CD4-positive, alpha-beta T cell (primary cell): ENCODE measurements at regions of chr10 and their contacts with region 1.

Region 1: DNA sequence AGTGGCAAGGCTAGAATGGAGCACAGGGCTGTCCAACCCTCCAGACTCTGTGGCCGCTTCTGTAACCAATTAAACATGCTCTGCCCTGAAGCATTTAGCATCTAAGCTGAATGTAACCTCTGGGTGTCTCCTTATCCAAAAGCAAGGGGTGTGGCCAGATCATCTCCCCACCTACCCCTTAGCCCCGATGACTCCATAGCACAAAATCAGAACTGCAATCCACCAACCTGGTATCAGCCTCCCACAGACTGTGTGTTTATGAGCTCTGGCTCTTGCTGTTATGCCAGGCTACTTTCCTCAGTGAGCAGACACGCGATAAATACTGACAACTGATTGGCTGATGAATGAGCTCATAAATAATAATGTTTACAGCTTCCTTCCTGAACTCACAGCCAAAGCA is 3.2 kb downstream of the FRMD4A start:
- DNase-seq: no peak
- ATAC-seq: no peak
- H3K4me3 ChIP-seq: no peak overlapping the region
- H3K4me3 Mint-ChIP-seq: no peak overlapping the region
- H3K27ac ChIP-seq: no peak overlapping the region
- H3K27ac Mint-ChIP-seq: no peak overlapping the region
- H3K4me1 ChIP-seq: no peaks in the 10 kb centered on the region
- H3K4me1 Mint-ChIP-seq: no peaks in the 10 kb centered on the region
- H3K27me3 ChIP-seq: peaks cover 8 to 30% of the 10 kb centered on the region in 2 experiments
- H3K27me3 Mint-ChIP-seq: peaks cover 42% of the 10 kb centered on the region
- CTCF ChIP-seq: no peak

Region 2: DNA sequence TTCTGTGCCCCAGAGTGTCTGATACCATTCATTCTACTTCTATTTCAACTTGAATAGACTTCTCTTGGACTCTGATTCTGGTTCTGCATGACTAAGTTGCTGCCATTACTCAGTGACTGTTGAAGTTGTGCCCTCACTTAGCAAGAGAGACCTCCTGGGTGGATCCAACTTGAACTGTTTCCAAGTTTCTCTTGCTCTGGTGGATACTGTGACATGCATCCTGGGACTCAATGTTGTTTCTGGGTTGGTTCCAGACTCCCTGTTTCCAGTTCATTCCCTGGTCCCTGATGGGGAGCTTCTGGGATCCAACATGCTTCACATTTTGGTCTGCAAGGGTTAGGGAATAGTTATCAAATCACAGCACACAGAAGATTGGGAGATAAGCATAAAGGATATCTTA is 766.9 kb before region 1 on chr10:
- CTCF ChIA-PET with region 1: no interaction called
- POLR2A ChIA-PET with region 1: no interaction called
- intact Hi-C with region 1: no loop called
- DNase-seq: no peak
- ATAC-seq: no peak
- H3K4me3 ChIP-seq: no peak overlapping the region
- H3K4me3 Mint-ChIP-seq: no peak overlapping the region
- H3K27ac ChIP-seq: no peak overlapping the region
- H3K27ac Mint-ChIP-seq: no peak overlapping the region
- H3K4me1 ChIP-seq: no peaks in the 10 kb centered on the region
- H3K4me1 Mint-ChIP-seq: no peaks in the 10 kb centered on the region
- H3K27me3 ChIP-seq: no peaks in the 10 kb centered on the region
- H3K27me3 Mint-ChIP-seq: peaks cover 7% of the 10 kb centered on the region
- CTCF ChIP-seq: no peak

Region 3: GRCh38 chr10:14262836-14263425 is 64.6 kb before region 1 on chr10:
- CTCF ChIA-PET with region 1: no interaction called
- POLR2A ChIA-PET with region 1: no interaction called
- intact Hi-C with region 1: loop called in 1 of 2 experiments (anchors 2 kb)
- DNase-seq: no peak
- ATAC-seq: no peak
- H3K4me3 ChIP-seq: no peak overlapping the region
- H3K4me3 Mint-ChIP-seq: no peak overlapping the region
- H3K27ac ChIP-seq: no peak overlapping the region
- H3K27ac Mint-ChIP-seq: no peak overlapping the region
- H3K4me1 ChIP-seq: no peaks in the 10 kb centered on the region
- H3K4me1 Mint-ChIP-seq: no peaks in the 10 kb centered on the region
- H3K27me3 ChIP-seq: peaks cover 2 to 6% of the 10 kb centered on the region in 2 experiments
- H3K27me3 Mint-ChIP-seq: peaks cover 35% of the 10 kb centered on the region
- CTCF ChIP-seq: no peak

Region 4: GRCh38 chr10:14349081-14349480 is 21.6 kb after region 1 on chr10:
- CTCF ChIA-PET with region 1: no interaction called
- POLR2A ChIA-PET with region 1: no interaction called
- intact Hi-C with region 1: no loop called
- DNase-seq: no peak
- ATAC-seq: no peak
- H3K4me3 ChIP-seq: no peak overlapping the region
- H3K4me3 Mint-ChIP-seq: no peak overlapping the region
- H3K27ac ChIP-seq: no peak overlapping the region
- H3K27ac Mint-ChIP-seq: no peak overlapping the region
- H3K4me1 ChIP-seq: no peaks in the 10 kb centered on the region
- H3K4me1 Mint-ChIP-seq: no peaks in the 10 kb centered on the region
- H3K27me3 ChIP-seq: no peaks in the 10 kb centered on the region
- H3K27me3 Mint-ChIP-seq: peaks cover 8% of the 10 kb centered on the region
- CTCF ChIP-seq: no peak